B cell (primary cell): ENCODE measurements at regions of chr17 and their contacts with region 1.

Region 1: GRCh38 chr17:36534840-36535668 is at the starts of genes MYO19 and PIGW:
- DNase-seq: peak; percentile 93
- ATAC-seq: peak; percentile 78
- H3K4me3 ChIP-seq: peak within 1 kb of the TSS; percentile 62 to 99 (median 94)
- H3K4me3 Mint-ChIP-seq: peak within 1 kb of the TSS; percentile 96
- H3K27ac ChIP-seq: peak within 1 kb of the TSS; percentile 96 to 97
- H3K27ac Mint-ChIP-seq: peak within 1 kb of the TSS; percentile 99
- H3K4me1 ChIP-seq: peaks cover 9 to 18% of the 10 kb centered on the region in 2 donors
- H3K4me1 Mint-ChIP-seq: peaks cover 21% of the 10 kb centered on the region
- H3K27me3 ChIP-seq: no peaks in the 10 kb centered on the region
- H3K27me3 Mint-ChIP-seq: no peaks in the 10 kb centered on the region
- CTCF ChIP-seq: no peak
- total RNA-seq, gene MYO19: 65.7 and 76.8 TPM in 2 replicates
- total RNA-seq, gene PIGW: 5.9 and 6.3 TPM in 2 replicates

Region 2: DNA sequence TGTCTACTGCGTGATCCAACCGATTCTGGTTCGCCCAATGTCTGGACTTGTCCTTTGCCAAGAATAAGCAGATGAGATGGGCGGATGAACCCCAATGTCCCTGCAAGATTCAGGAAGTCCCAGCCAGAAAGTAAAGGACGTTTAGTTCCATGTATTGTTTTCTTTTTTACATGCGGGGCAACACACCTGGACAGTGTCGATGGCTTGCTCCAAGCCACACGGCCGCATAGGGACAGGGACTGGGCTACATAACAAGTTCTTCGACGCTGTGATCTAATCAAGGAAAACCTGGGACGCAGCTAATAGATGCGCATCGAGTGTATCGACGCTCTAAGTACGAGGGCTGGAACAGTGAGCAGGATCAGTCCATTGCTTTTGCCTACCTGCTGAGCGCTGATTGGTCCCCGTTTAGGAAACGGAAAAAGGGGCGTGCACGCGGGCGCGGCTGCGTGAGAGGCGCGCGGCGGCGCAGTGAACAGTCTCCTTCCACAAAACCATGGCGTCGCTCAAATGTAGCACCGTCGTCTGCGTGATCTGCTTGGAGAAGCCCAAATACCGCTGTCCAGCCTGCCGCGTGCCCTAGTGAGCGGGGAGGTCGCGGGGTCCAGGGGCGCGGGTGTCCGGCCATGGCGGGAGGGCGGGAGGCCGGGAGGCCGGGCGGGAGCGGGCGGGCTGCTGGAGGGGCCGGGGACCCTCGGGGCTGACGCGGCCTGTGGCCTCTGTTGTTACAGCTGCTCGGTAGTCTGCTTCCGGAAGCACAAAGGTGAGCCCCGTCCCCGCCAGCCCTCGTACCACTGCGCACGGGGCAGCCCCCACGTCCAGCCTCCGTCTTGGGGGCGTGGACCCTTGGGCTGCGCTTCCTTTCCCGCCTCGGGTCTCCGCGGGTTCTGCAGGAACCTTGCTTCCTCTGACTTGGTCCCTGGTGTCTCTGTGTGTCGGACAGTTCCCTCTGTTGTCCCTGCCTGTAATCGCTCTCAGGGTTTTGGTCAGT is 48.6 kb before region 1 on chr17 and contains the start of gene ZNHIT3:
- CTCF ChIA-PET with region 1: interaction called, 5 read pairs
- POLR2A ChIA-PET with region 1: interaction called, 3 read pairs
- intact Hi-C with region 1: loop called (anchors 2 kb)
- DNase-seq: peak; percentile 93
- ATAC-seq: peak; percentile 89
- H3K4me3 ChIP-seq: peak within 1 kb of the TSS; percentile 59 to 95 (median 86)
- H3K4me3 Mint-ChIP-seq: peak within 1 kb of the TSS; percentile 99
- H3K27ac ChIP-seq: peak within 1 kb of the TSS; percentile 56 to 83
- H3K27ac Mint-ChIP-seq: peak within 1 kb of the TSS; percentile 99
- H3K4me1 ChIP-seq: peaks cover 31 to 38% of the 10 kb centered on the region in 2 donors
- H3K4me1 Mint-ChIP-seq: peaks cover 44% of the 10 kb centered on the region
- H3K27me3 ChIP-seq: peaks cover 0 to 16% (median 13%) of the 10 kb centered on the region in 4 experiments
- H3K27me3 Mint-ChIP-seq: peaks cover 10% of the 10 kb centered on the region
- CTCF ChIP-seq: no peak
- total RNA-seq, gene ZNHIT3: 50.5 and 53.3 TPM in 2 replicates

Region 3: GRCh38 chr17:36550491-36551417 is 15.7 kb after region 1 on chr17:
- CTCF ChIA-PET with region 1: interaction called, 34 read pairs
- POLR2A ChIA-PET with region 1: interaction called, 57 read pairs
- intact Hi-C with region 1: loop called (anchors 2 kb)
- DNase-seq: peak; percentile 75
- ATAC-seq: peak; percentile 53
- H3K4me3 ChIP-seq: peak overlapping the region in 1 of 5 experiments; percentile 20
- H3K4me3 Mint-ChIP-seq: peak overlapping the region; percentile 61
- H3K27ac ChIP-seq: peak overlapping the region; percentile 45 to 53
- H3K27ac Mint-ChIP-seq: peak overlapping the region; percentile 74
- H3K4me1 ChIP-seq: peaks cover 60 to 61% of the 10 kb centered on the region in 2 donors
- H3K4me1 Mint-ChIP-seq: peaks cover 74% of the 10 kb centered on the region
- H3K27me3 ChIP-seq: no peaks in the 10 kb centered on the region
- H3K27me3 Mint-ChIP-seq: no peaks in the 10 kb centered on the region
- CTCF ChIP-seq: no peak

Region 4: GRCh38 chr17:36591434-36592315 is 56.6 kb after region 1 on chr17 and contains the start of gene DHRS11:
- CTCF ChIA-PET with region 1: no interaction called
- POLR2A ChIA-PET with region 1: no interaction called
- intact Hi-C with region 1: loop called (anchors 2 kb)
- DNase-seq: peak; percentile 79
- ATAC-seq: peak; percentile 98
- H3K4me3 ChIP-seq: peak within 1 kb of the TSS in 4 of 5 experiments; percentile 41 to 67 (median 61)
- H3K4me3 Mint-ChIP-seq: peak within 1 kb of the TSS; percentile 75
- H3K27ac ChIP-seq: peak within 1 kb of the TSS; percentile 14 to 70
- H3K27ac Mint-ChIP-seq: peak within 1 kb of the TSS; percentile 61
- H3K4me1 ChIP-seq: peaks cover 11 to 13% of the 10 kb centered on the region in 2 donors
- H3K4me1 Mint-ChIP-seq: peaks cover 20% of the 10 kb centered on the region
- H3K27me3 ChIP-seq: peaks cover 0 to 10% (median 0%) of the 10 kb centered on the region in 4 experiments
- H3K27me3 Mint-ChIP-seq: no peaks in the 10 kb centered on the region
- CTCF ChIP-seq: no peak
- total RNA-seq, gene DHRS11: 7.3 and 8.2 TPM in 2 replicates